Naive thymus-derived CD4-positive, alpha-beta T cell (primary cell): ENCODE measurements at regions of chr15 and their contacts with region 1.

Region 1: GRCh38 chr15:87639305-87640011 is 617.1 kb downstream of the NTRK3 start:
- DNase-seq: no peak
- ATAC-seq: no peak
- H3K4me3 ChIP-seq: no peak overlapping the region
- H3K4me3 Mint-ChIP-seq: no peak overlapping the region
- H3K27ac ChIP-seq: no peak overlapping the region
- H3K27ac Mint-ChIP-seq: no peak overlapping the region
- H3K4me1 ChIP-seq: peaks cover 0 to 15% of the 10 kb centered on the region in 2 donors
- H3K4me1 Mint-ChIP-seq: peaks cover 3 to 24% (median 19%) of the 10 kb centered on the region in 7 donors
- H3K27me3 ChIP-seq: no peaks in the 10 kb centered on the region
- H3K27me3 Mint-ChIP-seq: no peaks in the 10 kb centered on the region

Region 2: DNA sequence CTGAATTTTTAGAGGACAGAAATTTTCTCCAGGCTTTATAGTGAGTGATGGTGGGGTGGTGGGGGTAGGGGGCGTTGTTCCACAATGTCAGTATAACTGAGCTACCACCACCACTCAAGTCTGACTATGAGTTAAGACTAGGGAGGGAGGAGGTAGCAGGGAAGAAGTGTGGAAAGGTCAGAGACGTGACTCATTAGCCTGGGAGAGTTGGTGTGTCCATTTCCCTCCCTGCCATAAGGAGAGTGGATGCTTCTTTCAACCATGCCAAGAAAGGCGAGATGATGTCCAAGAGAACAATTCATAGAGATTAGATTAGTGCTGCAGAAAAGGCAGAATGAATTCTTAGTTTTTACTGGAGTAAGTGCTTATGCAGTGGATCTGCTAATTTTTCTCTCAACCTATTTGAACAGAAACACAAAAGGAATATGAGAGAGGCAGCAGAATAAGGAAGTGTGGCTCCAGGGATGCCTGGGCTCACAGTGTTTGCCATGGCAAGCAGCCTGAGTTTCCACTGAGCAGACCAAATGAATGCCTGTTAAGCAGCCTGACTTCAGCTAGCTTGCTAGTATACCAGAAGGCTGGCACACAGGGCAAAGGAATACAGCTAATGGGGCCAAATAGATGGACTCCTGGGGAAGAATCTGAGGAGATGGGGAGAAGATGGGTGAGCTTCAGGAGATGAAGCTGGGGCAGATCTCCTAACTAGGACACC is 91.8 kb before region 1 on chr15:
- CTCF ChIA-PET with region 1: no interaction called
- POLR2A ChIA-PET with region 1: no interaction called
- intact Hi-C with region 1: no loop called
- DNase-seq: no peak
- ATAC-seq: no peak
- H3K4me3 ChIP-seq: no peak overlapping the region
- H3K4me3 Mint-ChIP-seq: no peak overlapping the region
- H3K27ac ChIP-seq: no peak overlapping the region
- H3K27ac Mint-ChIP-seq: no peak overlapping the region
- H3K4me1 ChIP-seq: no peaks in the 10 kb centered on the region
- H3K4me1 Mint-ChIP-seq: no peaks in the 10 kb centered on the region
- H3K27me3 ChIP-seq: no peaks in the 10 kb centered on the region
- H3K27me3 Mint-ChIP-seq: peaks cover 0 to 5% (median 2%) of the 10 kb centered on the region in 5 donors

Region 3: DNA sequence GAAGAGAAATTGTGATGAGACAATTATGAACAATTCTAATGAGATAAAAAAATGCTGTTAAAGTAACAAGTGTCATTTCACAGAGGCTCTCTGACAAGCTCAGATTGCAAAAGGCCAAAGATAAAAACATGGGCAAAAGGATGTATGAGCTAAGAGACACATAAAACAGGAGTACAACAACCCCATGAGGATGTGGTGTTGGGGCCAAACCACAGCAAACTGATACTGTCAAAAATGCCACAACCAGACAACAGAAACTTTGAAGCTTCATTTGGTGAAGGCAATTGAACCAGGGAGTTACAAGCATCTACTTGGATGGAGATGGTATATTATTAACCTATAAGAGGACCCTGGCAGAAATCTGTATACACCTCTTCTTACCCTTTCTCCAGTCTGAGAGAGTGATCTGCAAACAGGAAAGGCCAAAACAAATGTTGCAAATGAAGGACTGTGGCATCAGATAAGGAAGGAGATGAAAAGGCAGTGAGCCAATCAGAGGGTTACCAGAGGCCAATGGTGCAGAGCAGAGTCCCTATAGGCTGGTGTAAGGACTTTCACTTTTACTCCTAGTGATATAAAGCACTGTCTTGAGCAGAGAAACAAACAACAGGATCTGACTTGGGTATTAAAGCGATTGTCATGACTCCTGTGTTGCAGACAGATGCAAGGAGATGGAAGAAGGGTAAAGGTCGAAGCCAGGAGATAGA is 42.0 kb before region 1 on chr15:
- CTCF ChIA-PET with region 1: no interaction called
- POLR2A ChIA-PET with region 1: interaction called, 3 read pairs
- intact Hi-C with region 1: loop called in 1 of 2 experiments (anchors 5 kb)
- DNase-seq: peak in 7 of 9 donors; percentile 11 to 66 (median 29)
- ATAC-seq: peak; percentile 93
- H3K4me3 ChIP-seq: peak overlapping the region; percentile 17
- H3K4me3 Mint-ChIP-seq: peak overlapping the region; percentile 11 to 61 (median 50)
- H3K27ac ChIP-seq: no peak overlapping the region
- H3K27ac Mint-ChIP-seq: peak overlapping the region; percentile 44 to 87 (median 75)
- H3K4me1 ChIP-seq: peaks cover 11 to 15% of the 10 kb centered on the region in 2 donors
- H3K4me1 Mint-ChIP-seq: peaks cover 8 to 35% (median 28%) of the 10 kb centered on the region in 7 donors
- H3K27me3 ChIP-seq: no peaks in the 10 kb centered on the region
- H3K27me3 Mint-ChIP-seq: peaks cover 0 to 8% (median 0%) of the 10 kb centered on the region in 5 donors

Region 4: GRCh38 chr15:87681054-87681453 is 41.6 kb after region 1 on chr15:
- CTCF ChIA-PET with region 1: no interaction called
- POLR2A ChIA-PET with region 1: no interaction called
- intact Hi-C with region 1: loop called in 1 of 2 experiments (anchors 5 kb)
- DNase-seq: peak in 6 of 9 donors; percentile 12 to 59 (median 37)
- ATAC-seq: peak; percentile 44
- H3K4me3 ChIP-seq: no peak overlapping the region
- H3K4me3 Mint-ChIP-seq: peak overlapping the region in 8 of 10 donors; percentile 8 to 72 (median 48)
- H3K27ac ChIP-seq: no peak overlapping the region
- H3K27ac Mint-ChIP-seq: peak overlapping the region in 8 of 9 donors; percentile 14 to 85 (median 70)
- H3K4me1 ChIP-seq: peaks cover 0 to 31% of the 10 kb centered on the region in 2 donors
- H3K4me1 Mint-ChIP-seq: peaks cover 6 to 53% (median 45%) of the 10 kb centered on the region in 7 donors
- H3K27me3 ChIP-seq: no peaks in the 10 kb centered on the region
- H3K27me3 Mint-ChIP-seq: no peaks in the 10 kb centered on the region